ENCODE measurements at regions of chr1 and their contacts with region 1.

Region 1: DNA sequence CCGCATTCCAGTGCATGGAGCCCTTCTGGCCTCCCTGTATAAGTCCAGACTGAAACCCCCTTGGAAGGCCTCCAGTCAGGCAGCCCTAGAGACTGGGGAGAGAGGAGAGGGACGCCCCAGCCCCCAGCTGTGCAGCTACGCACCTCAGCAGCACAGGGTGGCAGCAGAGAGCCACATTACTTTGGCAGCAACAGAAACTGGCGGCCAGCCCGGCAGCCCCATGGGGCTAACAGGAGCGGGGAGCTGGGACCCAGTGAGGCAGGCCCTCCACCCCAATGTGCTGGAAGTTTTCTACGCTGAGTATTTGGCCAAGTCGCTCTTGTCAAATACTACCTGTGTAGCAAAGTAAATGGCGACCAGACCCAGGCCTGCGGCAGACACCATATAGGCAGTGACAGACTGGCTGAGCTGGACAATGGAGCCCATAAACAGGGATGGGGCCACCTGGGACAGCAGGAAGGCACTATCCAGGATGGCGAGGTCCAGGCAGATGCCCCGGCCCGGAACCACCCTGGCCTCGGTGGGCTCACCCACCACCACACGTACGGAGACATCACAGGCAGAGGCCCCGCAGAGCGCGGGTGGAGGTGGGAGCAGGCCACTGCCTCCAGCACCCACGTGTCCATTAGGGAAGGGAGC is 21.2 kb downstream of the SLC45A3 start:
- DNase-seq: peak; percentile 85
- ATAC-seq: peak; percentile 93
- H3K4me3 Mint-ChIP-seq: no peak overlapping the region
- H3K27ac Mint-ChIP-seq: no peak overlapping the region
- H3K4me1 Mint-ChIP-seq: peaks cover 3% of the 10 kb centered on the region
- H3K27me3 Mint-ChIP-seq: peaks cover 3% of the 10 kb centered on the region

Region 2: GRCh38 chr1:205523891-205524793 is 134.9 kb before region 1 on chr1:
- CTCF ChIA-PET with region 1: interaction called, 107 read pairs
- DNase-seq: peak; percentile 79
- ATAC-seq: peak; percentile 67
- H3K4me3 Mint-ChIP-seq: no peak overlapping the region
- H3K27ac Mint-ChIP-seq: no peak overlapping the region
- H3K4me1 Mint-ChIP-seq: no peaks in the 10 kb centered on the region
- H3K27me3 Mint-ChIP-seq: peaks cover 3% of the 10 kb centered on the region

Region 3: GRCh38 chr1:205582471-205583291 is 76.4 kb before region 1 on chr1:
- CTCF ChIA-PET with region 1: interaction called, 465 read pairs
- DNase-seq: no peak
- ATAC-seq: no peak
- H3K4me3 Mint-ChIP-seq: no peak overlapping the region
- H3K27ac Mint-ChIP-seq: no peak overlapping the region
- H3K4me1 Mint-ChIP-seq: peaks cover 16% of the 10 kb centered on the region
- H3K27me3 Mint-ChIP-seq: peaks cover 9% of the 10 kb centered on the region

Region 4: GRCh38 chr1:205645519-205645918 is 13.5 kb before region 1 on chr1:
- CTCF ChIA-PET with region 1: interaction called, 64 read pairs
- DNase-seq: no peak
- ATAC-seq: no peak
- H3K4me3 Mint-ChIP-seq: no peak overlapping the region
- H3K27ac Mint-ChIP-seq: no peak overlapping the region
- H3K4me1 Mint-ChIP-seq: no peaks in the 10 kb centered on the region
- H3K27me3 Mint-ChIP-seq: peaks cover 9% of the 10 kb centered on the region

Region 5: GRCh38 chr1:205719762-205720161 is 60.7 kb after region 1 on chr1:
- CTCF ChIA-PET with region 1: interaction called, 153 read pairs
- DNase-seq: no peak
- ATAC-seq: peak; percentile 42
- H3K4me3 Mint-ChIP-seq: no peak overlapping the region
- H3K27ac Mint-ChIP-seq: peak overlapping the region; percentile 58
- H3K4me1 Mint-ChIP-seq: peaks cover 24% of the 10 kb centered on the region
- H3K27me3 Mint-ChIP-seq: no peaks in the 10 kb centered on the region

Region 6: DNA sequence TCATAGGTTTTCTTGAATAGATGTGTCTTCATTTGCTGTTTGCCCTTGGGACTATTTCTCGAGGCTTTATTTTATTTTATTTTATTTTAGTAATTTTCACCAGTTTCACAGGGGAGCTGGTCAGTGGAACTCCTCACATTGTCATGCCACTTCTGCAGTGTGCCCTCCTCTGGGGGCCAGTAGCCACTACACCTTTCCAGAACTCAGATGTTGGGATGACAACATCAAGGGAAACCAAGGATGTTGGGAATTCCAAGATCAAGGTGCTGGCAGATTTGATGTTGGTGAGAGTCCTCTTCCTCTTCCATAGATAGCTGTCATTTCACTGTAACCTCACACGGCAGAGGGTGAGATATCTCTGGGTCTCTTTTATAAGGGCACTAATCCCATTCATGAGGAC is 248.7 kb after region 1 on chr1:
- CTCF ChIA-PET with region 1: interaction called, 10 read pairs
- DNase-seq: no peak
- ATAC-seq: no peak
- H3K4me3 Mint-ChIP-seq: no peak overlapping the region
- H3K27ac Mint-ChIP-seq: no peak overlapping the region
- H3K4me1 Mint-ChIP-seq: no peaks in the 10 kb centered on the region
- H3K27me3 Mint-ChIP-seq: peaks cover 30% of the 10 kb centered on the region

Region 7: DNA sequence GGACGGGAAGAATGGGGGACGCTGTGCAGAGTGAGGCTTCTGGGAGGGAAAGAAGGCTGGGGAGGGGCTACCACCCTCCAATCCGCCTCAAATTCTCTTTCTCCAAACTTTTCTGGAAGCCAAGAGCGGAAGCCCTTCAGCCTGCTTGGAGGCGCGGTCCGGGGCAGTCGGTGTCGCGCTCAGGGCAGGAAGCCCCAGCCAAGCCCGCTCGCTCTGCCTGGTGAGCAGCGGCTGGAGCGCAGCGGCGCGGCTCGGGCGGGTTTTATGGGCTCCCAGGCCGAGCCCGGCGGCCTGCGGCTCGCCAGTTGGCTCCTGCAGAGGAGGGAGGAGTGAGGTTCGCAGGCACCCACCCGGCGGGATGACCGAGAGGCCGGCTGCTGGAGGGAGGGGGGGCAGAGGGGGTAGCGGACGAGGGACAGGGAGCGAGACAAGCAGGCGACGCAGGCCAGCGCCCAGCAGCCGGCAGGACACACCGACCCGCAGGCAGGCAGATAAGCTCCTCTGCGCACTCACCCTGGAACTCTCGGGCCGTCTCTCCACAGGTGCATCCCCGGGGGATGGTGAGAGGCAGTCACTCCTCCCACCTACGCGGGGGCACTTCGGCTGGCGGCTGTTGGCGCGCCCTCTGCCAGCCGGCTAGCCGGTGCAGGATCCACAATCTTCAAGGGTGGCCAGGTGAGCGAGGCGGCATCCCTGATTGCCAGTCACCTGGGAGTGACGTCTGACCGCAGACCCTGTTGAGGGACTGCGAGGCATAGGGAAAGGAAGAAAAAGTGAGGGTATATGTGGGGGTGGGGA is 458.3 kb after region 1 on chr1 and contains the start of gene AVPR1B:
- CTCF ChIA-PET with region 1: no interaction called
- DNase-seq: peak; percentile 37
- ATAC-seq: peak; percentile 53
- H3K4me3 Mint-ChIP-seq: peak within 1 kb of the TSS; percentile 31
- H3K27ac Mint-ChIP-seq: no peak within 1 kb of the TSS
- H3K4me1 Mint-ChIP-seq: peaks cover 7% of the 10 kb centered on the region
- H3K27me3 Mint-ChIP-seq: peaks cover 66% of the 10 kb centered on the region
- total RNA-seq, gene AVPR1B: not detected